Endothelial cell of umbilical vein (primary cell): ENCODE measurements at regions of chr3 and their contacts with region 1.

Region 1: DNA sequence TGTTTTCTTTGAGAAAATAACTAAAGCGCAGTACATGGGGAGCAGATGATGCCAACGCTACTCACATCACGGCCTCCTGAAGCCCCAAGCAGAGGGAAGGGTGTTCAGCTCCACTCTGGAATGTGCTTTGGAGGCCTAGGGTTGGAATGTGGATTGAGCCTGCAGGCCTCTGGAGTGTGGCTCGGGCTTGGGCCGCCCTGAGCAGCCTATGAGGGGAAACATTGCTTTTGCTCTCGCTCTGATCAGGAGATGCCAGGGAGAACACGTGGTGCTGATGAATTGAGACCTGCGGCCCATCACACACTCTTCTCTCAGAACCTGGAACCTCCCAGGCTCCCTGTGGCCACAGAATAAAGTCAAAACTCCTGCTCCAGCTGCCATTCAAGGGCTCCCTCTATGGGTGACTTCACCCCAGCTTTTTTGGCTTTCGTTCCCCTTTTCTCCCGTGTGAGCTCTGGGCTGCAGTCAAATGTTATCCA is 23.3 kb downstream of the CCDC13 start:
- DNase-seq: no peak
- H3K4me3 ChIP-seq: no peak overlapping the region
- H3K27ac ChIP-seq: no peak overlapping the region
- H3K4me1 ChIP-seq: no peaks in the 10 kb centered on the region
- H3K27me3 ChIP-seq: peaks cover 0 to 2% of the 10 kb centered on the region in 2 experiments
- CTCF ChIP-seq: peak in 1 of 2 donors; percentile 6
- POLR2A ChIP-seq: no peak

Region 2: DNA sequence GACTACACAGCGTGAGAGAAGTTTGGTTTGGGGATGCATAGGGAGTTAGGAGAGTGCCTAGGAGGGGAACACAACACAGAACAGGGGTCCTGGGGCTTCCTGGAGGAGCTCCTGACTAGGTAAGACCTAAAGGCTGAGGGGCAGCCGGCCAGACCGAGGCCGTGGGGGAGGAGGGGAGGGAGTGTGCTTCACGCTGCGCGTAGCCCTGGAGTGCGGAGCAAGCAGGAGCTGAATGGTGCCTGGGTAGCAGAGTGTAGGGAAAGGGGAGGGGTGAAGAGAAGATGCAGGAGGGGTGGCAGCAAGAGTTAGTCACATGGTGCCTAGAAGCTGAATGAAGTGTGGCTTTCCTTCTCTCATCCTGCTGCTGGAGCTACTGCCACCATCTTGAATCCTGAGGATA is 14.8 kb before region 1 on chr3:
- CTCF ChIA-PET with region 1: interaction called, 10 read pairs
- POLR2A ChIA-PET with region 1: no interaction called
- dilution Hi-C with region 1: no loop called
- intact Hi-C with region 1: no loop called
- DNase-seq: no peak
- H3K4me3 ChIP-seq: no peak overlapping the region
- H3K27ac ChIP-seq: no peak overlapping the region
- H3K4me1 ChIP-seq: no peaks in the 10 kb centered on the region
- H3K27me3 ChIP-seq: no peaks in the 10 kb centered on the region
- CTCF ChIP-seq: no peak
- POLR2A ChIP-seq: no peak

Region 3: DNA sequence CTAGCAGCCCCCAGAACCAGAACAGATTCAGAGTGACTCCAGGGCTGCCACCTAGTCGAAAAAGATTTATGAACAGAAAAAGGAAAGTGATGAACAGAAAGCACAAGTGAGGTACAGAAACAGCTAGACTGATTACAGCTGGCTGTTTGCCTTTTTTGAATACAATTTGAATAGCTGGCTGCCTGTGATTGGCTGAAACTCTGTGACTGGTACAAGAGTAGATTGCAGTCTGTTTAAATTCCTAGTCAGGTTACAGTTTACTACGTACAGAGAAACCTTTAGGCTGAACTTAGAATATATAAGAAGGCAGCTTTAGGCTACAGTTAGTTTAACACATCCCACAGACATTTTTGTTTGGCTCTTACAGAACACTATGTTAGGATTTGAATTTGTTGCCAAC is 13.2 kb after region 1 on chr3:
- CTCF ChIA-PET with region 1: interaction called, 61 read pairs
- POLR2A ChIA-PET with region 1: no interaction called
- dilution Hi-C with region 1: no loop called
- intact Hi-C with region 1: no loop called
- DNase-seq: no peak
- H3K4me3 ChIP-seq: no peak overlapping the region
- H3K27ac ChIP-seq: no peak overlapping the region
- H3K4me1 ChIP-seq: no peaks in the 10 kb centered on the region
- H3K27me3 ChIP-seq: peaks cover 0 to 2% of the 10 kb centered on the region in 2 experiments
- CTCF ChIP-seq: no peak
- POLR2A ChIP-seq: no peak

Region 4: GRCh38 chr3:42773409-42773751 is 23.6 kb after region 1 on chr3:
- CTCF ChIA-PET with region 1: no interaction called
- POLR2A ChIA-PET with region 1: no interaction called
- dilution Hi-C with region 1: no loop called
- intact Hi-C with region 1: no loop called
- DNase-seq: no peak
- H3K4me3 ChIP-seq: peak overlapping the region; percentile 38 to 85 (median 51)
- H3K27ac ChIP-seq: peak overlapping the region; percentile 25
- H3K4me1 ChIP-seq: peaks cover 3% of the 10 kb centered on the region
- H3K27me3 ChIP-seq: no peaks in the 10 kb centered on the region
- CTCF ChIP-seq: no peak
- POLR2A ChIP-seq: no peak

Region 5: GRCh38 chr3:43094851-43095250 is 345.1 kb after region 1 on chr3:
- CTCF ChIA-PET with region 1: no interaction called
- POLR2A ChIA-PET with region 1: no interaction called
- dilution Hi-C with region 1: no loop called
- intact Hi-C with region 1: no loop called
- DNase-seq: no peak
- H3K4me3 ChIP-seq: no peak overlapping the region
- H3K27ac ChIP-seq: no peak overlapping the region
- H3K4me1 ChIP-seq: no peaks in the 10 kb centered on the region
- H3K27me3 ChIP-seq: no peaks in the 10 kb centered on the region
- CTCF ChIP-seq: no peak
- POLR2A ChIP-seq: no peak